Posterior cingulate gyrus (tissue), 11 donors: ENCODE measurements at regions of chr2 and their contacts with region 1.

Region 1: GRCh38 chr2:190528521-190529001 is 6.0 kb downstream of the NEMP2 start:
- DNase-seq: no peak

Region 2: GRCh38 chr2:190435031-190435670 is 93.4 kb before region 1 on chr2:
- intact Hi-C with region 1: no loop called
- DNase-seq: no peak

Region 3: DNA sequence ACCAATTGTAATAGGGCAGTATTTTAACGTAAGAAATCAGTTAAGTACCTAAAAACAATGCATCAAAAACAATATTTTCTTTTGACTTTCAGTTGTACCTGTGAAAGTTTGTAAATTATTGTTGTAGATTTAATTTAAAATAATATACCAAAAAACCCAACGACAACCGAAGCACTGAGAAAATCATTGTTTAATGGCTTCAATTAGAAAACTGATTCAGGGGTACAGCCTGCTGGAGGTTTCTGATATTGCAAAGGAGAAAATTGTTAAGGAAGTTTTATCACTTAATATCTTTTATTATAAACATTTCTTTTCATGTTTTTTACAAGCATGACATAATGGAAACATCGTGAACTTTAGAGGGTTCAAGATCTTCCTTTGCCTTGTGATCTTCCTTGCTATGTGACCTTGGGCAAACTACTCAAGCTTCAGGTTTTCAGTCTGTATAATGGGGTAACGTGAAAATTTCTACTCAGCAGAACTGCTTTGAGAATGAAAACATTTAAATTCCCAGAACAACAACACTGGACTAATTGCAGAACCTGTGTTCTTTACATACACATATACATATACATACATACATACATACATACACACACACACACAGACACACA is 275.7 kb after region 1 on chr2:
- intact Hi-C with region 1: loop called (anchors 5 kb)
- DNase-seq: no peak

Region 4: DNA sequence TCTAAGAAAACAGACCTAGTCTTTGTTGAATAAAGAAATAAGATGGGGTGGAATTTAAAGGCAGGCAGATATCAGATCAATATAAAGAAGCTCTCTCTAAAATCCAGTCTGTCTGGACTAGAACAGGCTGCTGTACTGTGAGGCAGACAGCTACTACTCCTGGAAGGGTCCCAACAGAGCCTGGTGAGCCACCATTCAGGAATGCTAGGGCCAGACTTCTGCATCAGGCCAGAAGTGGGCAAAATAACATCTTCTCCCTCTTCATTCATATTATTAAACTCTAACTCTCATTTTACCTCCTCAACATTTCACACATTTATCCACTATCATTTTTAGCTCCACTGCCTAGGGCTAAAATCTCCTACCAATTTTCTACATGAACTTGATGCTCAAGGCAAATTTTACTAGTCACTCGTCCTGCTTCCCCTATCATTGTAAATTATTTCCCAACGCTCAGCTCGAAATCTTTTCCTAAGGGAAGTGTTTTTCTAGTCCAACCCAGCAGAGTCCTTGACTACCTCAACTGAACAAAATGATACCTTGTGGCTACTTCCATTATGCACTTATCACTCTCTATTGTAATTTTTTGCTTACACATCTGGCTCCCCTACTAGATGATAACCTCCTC is 306.9 kb after region 1 on chr2:
- intact Hi-C with region 1: no loop called
- DNase-seq: no peak